Breast epithelium (tissue), 4 donors: ENCODE measurements at regions of chr9 and their contacts with region 1.

Region 1: GRCh38 chr9:129602598-129603415 is 18.1 kb downstream of the C9orf50 start:
- DNase-seq: no peak
- H3K4me3 ChIP-seq: no peak overlapping the region
- H3K27ac ChIP-seq: peak overlapping the region in 1 of 2 donors; percentile 19
- H3K4me1 ChIP-seq: peaks cover 0 to 13% of the 10 kb centered on the region in 2 donors
- H3K27me3 ChIP-seq: no peaks in the 10 kb centered on the region
- CTCF ChIP-seq: no peak
- POLR2A ChIP-seq: no peak

Region 2: DNA sequence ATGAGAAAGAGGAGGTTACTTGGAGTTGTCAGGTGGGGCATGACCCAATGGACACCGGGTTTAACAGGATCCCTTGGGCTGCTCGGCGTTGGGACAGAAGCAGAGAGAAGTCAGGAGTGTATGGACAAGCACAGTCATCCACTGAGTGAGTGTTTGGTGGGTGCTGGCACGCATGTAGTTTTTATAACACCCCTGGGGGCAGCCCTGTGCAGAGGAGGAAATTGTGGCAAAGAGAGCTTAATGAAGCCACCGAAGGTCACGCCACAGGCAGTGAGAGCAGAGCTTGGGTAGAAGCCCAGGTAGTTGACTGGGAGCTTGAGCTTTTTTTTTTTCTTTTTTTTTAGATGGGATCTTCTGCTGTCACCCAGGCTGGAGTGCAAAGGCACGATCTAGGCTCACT is 381.6 kb before region 1 on chr9:
- intact Hi-C with region 1: no loop called
- DNase-seq: no peak
- H3K4me3 ChIP-seq: no peak overlapping the region
- H3K27ac ChIP-seq: no peak overlapping the region
- H3K4me1 ChIP-seq: no peaks in the 10 kb centered on the region
- H3K27me3 ChIP-seq: no peaks in the 10 kb centered on the region
- CTCF ChIP-seq: no peak
- POLR2A ChIP-seq: no peak

Region 3: GRCh38 chr9:129495534-129496325 is 107.1 kb before region 1 on chr9:
- intact Hi-C with region 1: loop called (anchors 5 kb)
- DNase-seq: peak; percentile 92 to 96
- H3K4me3 ChIP-seq: peak overlapping the region; percentile 59 to 77 (median 67)
- H3K27ac ChIP-seq: peak overlapping the region; percentile 100
- H3K4me1 ChIP-seq: peaks cover 17 to 38% of the 10 kb centered on the region in 2 donors
- H3K27me3 ChIP-seq: no peaks in the 10 kb centered on the region
- CTCF ChIP-seq: peak in 1 of 3 donors; percentile 44
- POLR2A ChIP-seq: peak; percentile 11

Region 4: DNA sequence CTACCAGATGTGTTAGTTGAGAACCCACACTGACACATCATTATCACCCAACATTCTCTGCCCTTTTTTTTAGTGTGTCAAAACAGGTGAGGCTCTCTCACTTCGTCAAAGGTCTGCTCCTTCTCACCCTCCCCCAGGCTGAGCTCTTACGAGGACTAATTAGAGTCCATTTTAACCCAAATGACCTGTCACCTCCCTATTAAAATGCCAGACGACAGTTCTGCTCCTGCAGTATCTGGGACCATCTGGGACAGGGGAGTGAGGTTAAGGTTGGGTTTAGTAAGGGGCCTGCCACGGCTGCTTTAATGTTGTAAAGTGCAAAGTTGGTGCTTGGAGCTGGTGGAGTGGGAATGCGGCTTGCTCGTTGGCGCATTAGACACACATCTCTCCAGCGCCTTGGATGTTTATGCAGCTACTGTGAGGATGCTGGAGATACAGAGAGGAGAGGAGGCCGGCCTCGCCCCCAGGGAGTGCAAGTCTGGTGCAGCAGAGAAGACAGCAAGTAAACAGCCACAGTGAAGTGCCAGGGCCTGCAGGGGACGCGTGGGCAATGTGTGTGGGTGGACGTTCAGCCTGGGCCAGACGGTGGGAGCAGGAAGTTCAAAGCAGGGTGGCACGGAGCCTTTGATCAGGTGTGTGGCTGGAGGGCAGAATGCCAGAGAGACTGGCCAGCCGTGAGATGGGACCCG is 78.1 kb before region 1 on chr9:
- intact Hi-C with region 1: no loop called
- DNase-seq: peak in 1 of 2 donors; percentile 57
- H3K4me3 ChIP-seq: no peak overlapping the region
- H3K27ac ChIP-seq: peak overlapping the region in 1 of 2 donors; percentile 38
- H3K4me1 ChIP-seq: peaks cover 0 to 6% of the 10 kb centered on the region in 2 donors
- H3K27me3 ChIP-seq: no peaks in the 10 kb centered on the region
- CTCF ChIP-seq: no peak
- POLR2A ChIP-seq: no peak